Activated B cell treated with CpG ODN at 0.5 μM for 24 hours (primary cell): ENCODE measurements at regions of chrX and their contacts with region 1.

Region 1: DNA sequence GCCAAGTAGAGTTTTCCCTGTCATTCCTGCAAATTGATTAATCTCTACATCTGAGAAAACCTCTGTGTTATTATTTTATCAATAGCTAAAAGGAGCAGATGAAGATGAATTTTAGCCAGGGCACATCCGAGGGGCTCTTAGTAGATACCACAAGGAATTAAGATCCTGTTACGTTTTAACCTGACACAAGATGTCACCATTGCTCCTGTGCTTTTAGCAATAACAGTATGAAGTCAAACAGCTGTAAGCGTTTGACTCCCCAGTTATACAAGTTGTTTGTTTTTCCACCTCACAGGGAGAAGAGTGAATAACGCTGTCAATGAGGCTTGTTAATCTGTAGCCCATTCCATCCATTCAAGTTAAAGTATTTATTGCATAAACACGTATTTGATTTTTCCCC is 76.0 kb upstream of the AP1S2 start:
- DNase-seq: no peak
- ATAC-seq: no peak
- H3K4me3 Mint-ChIP-seq: no peak overlapping the region
- H3K27ac Mint-ChIP-seq: no peak overlapping the region
- H3K4me1 Mint-ChIP-seq: peaks cover 14% of the 10 kb centered on the region
- H3K27me3 Mint-ChIP-seq: no peaks in the 10 kb centered on the region
- CTCF ChIP-seq: no peak

Region 2: DNA sequence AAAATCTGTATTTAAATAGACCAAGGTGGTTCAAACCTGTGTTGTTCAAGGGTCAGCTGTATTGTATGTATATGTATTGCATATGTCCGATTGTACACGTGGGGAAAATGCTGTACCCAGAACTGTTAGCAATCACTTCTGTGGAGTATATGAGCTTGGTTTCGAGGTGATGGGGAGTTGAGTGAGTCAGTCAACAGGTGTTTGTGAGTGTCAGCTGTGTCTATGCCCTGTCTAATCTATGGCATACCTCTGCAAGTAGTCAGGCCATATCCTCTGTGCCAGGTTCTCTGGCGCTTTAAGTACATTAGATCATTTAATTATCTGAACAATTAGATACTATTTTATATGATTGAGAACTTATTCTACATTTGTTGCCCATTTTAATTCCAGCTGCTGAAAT is 132.9 kb before region 1 on chrX:
- CTCF ChIA-PET with region 1: no interaction called
- POLR2A ChIA-PET with region 1: no interaction called
- intact Hi-C with region 1: no loop called
- DNase-seq: no peak
- ATAC-seq: no peak
- H3K4me3 Mint-ChIP-seq: no peak overlapping the region
- H3K27ac Mint-ChIP-seq: no peak overlapping the region
- H3K4me1 Mint-ChIP-seq: peaks cover 25% of the 10 kb centered on the region
- H3K27me3 Mint-ChIP-seq: no peaks in the 10 kb centered on the region
- CTCF ChIP-seq: no peak

Region 3: GRCh38 chrX:16138108-16138427 is 207.5 kb after region 1 on chrX:
- CTCF ChIA-PET with region 1: interaction called, 16 read pairs
- POLR2A ChIA-PET with region 1: no interaction called
- intact Hi-C with region 1: no loop called
- DNase-seq: no peak
- ATAC-seq: peak; percentile 51
- H3K4me3 Mint-ChIP-seq: no peak overlapping the region
- H3K27ac Mint-ChIP-seq: no peak overlapping the region
- H3K4me1 Mint-ChIP-seq: peaks cover 13% of the 10 kb centered on the region
- H3K27me3 Mint-ChIP-seq: no peaks in the 10 kb centered on the region
- CTCF ChIP-seq: no peak

Region 4: DNA sequence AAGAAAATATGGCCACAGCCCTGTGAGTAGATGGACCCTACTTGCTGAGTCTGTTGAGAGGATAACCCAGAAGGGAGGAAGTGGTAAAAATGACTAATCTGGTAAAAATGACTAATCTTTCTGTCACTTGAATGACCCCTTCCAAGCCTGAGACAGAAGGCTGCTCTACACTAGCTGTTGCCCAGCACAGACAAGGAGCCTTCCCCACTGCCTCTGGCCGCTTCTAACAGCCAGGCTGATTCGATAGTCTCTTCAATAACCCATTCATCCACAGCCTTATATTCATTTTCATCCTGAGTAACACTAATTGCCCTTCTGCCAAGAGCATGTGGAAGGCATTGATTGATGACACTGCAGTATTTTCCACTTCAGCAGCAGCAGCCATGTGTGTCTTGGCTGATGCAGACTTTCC is 255.1 kb after region 1 on chrX:
- CTCF ChIA-PET with region 1: no interaction called
- POLR2A ChIA-PET with region 1: no interaction called
- intact Hi-C with region 1: no loop called
- DNase-seq: no peak
- ATAC-seq: peak; percentile 52
- H3K4me3 Mint-ChIP-seq: no peak overlapping the region
- H3K27ac Mint-ChIP-seq: no peak overlapping the region
- H3K4me1 Mint-ChIP-seq: no peaks in the 10 kb centered on the region
- H3K27me3 Mint-ChIP-seq: no peaks in the 10 kb centered on the region
- CTCF ChIP-seq: no peak

Region 5: DNA sequence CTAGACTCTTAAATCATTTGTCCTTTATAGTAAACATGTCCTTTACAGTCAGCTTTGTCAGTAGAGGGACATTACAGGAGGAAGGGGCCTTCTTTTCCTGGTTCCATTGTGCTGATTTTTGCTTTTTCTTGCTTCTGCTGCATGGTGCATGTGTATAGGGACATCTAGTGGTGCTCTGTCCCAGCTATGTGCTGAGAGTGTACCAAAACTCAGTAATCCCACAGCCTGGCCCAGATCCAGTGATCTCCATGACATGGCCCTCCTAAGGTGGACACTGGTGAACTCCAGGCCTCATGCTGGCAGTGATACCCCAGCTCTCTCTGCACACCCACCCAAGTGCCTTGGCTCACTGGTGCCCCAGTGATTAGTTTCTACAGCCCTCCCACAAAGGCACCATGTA is 281.9 kb after region 1 on chrX:
- CTCF ChIA-PET with region 1: interaction called, 6 read pairs
- POLR2A ChIA-PET with region 1: no interaction called
- intact Hi-C with region 1: loop called (anchors 2 kb)
- DNase-seq: no peak
- ATAC-seq: no peak
- H3K4me3 Mint-ChIP-seq: no peak overlapping the region
- H3K27ac Mint-ChIP-seq: no peak overlapping the region
- H3K4me1 Mint-ChIP-seq: no peaks in the 10 kb centered on the region
- H3K27me3 Mint-ChIP-seq: no peaks in the 10 kb centered on the region
- CTCF ChIP-seq: no peak

Region 6: GRCh38 chrX:16436348-16437188 is 506.0 kb after region 1 on chrX:
- CTCF ChIA-PET with region 1: no interaction called
- POLR2A ChIA-PET with region 1: no interaction called
- intact Hi-C with region 1: loop called (anchors 1 kb)
- DNase-seq: peak; percentile 15
- ATAC-seq: peak; percentile 25
- H3K4me3 Mint-ChIP-seq: no peak overlapping the region
- H3K27ac Mint-ChIP-seq: no peak overlapping the region
- H3K4me1 Mint-ChIP-seq: no peaks in the 10 kb centered on the region
- H3K27me3 Mint-ChIP-seq: peaks cover 6% of the 10 kb centered on the region
- CTCF ChIP-seq: no peak